ENCODE measurements at regions of chr20 and their contacts with region 1.

Region 1: GRCh38 chr20:17558154-17558940 is 11.5 kb upstream of the DSTN start:
- DNase-seq: no peak
- H3K4me3 Mint-ChIP-seq: peak overlapping the region; percentile 71
- H3K27ac Mint-ChIP-seq: peak overlapping the region; percentile 95
- H3K4me1 Mint-ChIP-seq: peaks cover 43% of the 10 kb centered on the region
- H3K27me3 Mint-ChIP-seq: no peaks in the 10 kb centered on the region

Region 2: GRCh38 chr20:17611540-17612286 is 53.4 kb after region 1 on chr20:
- intact Hi-C with region 1: no loop called
- DNase-seq: no peak
- H3K4me3 Mint-ChIP-seq: no peak overlapping the region
- H3K27ac Mint-ChIP-seq: peak overlapping the region; percentile 97
- H3K4me1 Mint-ChIP-seq: peaks cover 27% of the 10 kb centered on the region
- H3K27me3 Mint-ChIP-seq: no peaks in the 10 kb centered on the region

Region 3: GRCh38 chr20:17825960-17826843 is 267.9 kb after region 1 on chr20:
- intact Hi-C with region 1: loop called (anchors 1 kb)
- DNase-seq: peak; percentile 5
- H3K4me3 Mint-ChIP-seq: no peak overlapping the region
- H3K27ac Mint-ChIP-seq: peak overlapping the region; percentile 71
- H3K4me1 Mint-ChIP-seq: peaks cover 15% of the 10 kb centered on the region
- H3K27me3 Mint-ChIP-seq: peaks cover 4% of the 10 kb centered on the region

Measured in activated T-helper 1 cell treated with anti-CD3 and anti-CD28 coated beads, Interleukin-12 subunit alpha, Interleukin-12 subunit beta, Interleukin-2, Interleukin-4 antibody, amounts not matched to agents 30 ng/mL and 10 ng/mL and 1 ng/mL, durations not matched to agents 14 hours and 24 hours and 36 hours (primary cell).